Lower leg skin (tissue), 4 donors: ENCODE measurements at regions of chr1 and their contacts with region 1.

Region 1: GRCh38 chr1:172443626-172444453 is at the start of gene PIGC:
- DNase-seq: peak; percentile 83 to 98
- H3K4me3 ChIP-seq: peak within 1 kb of the TSS; percentile 86
- CTCF ChIP-seq: peak in 1 of 3 donors; percentile 75
- POLR2A ChIP-seq: no peak
- total RNA-seq, gene PIGC: 26.2 to 60.3 (median 48.4) TPM

Region 2: GRCh38 chr1:172532700-172533509 is 89.1 kb after region 1 on chr1 and contains the start of gene SUCO:
- intact Hi-C with region 1: loop called (anchors 10 kb)
- DNase-seq: peak; percentile 100
- H3K4me3 ChIP-seq: peak within 1 kb of the TSS; percentile 91
- CTCF ChIP-seq: no peak
- POLR2A ChIP-seq: peak in 1 of 2 donors; percentile 31
- total RNA-seq, gene SUCO: 30.0 to 32.8 (median 30.7) TPM